ENCODE measurements at regions of chr17 and their contacts with region 1.

Region 1: DNA sequence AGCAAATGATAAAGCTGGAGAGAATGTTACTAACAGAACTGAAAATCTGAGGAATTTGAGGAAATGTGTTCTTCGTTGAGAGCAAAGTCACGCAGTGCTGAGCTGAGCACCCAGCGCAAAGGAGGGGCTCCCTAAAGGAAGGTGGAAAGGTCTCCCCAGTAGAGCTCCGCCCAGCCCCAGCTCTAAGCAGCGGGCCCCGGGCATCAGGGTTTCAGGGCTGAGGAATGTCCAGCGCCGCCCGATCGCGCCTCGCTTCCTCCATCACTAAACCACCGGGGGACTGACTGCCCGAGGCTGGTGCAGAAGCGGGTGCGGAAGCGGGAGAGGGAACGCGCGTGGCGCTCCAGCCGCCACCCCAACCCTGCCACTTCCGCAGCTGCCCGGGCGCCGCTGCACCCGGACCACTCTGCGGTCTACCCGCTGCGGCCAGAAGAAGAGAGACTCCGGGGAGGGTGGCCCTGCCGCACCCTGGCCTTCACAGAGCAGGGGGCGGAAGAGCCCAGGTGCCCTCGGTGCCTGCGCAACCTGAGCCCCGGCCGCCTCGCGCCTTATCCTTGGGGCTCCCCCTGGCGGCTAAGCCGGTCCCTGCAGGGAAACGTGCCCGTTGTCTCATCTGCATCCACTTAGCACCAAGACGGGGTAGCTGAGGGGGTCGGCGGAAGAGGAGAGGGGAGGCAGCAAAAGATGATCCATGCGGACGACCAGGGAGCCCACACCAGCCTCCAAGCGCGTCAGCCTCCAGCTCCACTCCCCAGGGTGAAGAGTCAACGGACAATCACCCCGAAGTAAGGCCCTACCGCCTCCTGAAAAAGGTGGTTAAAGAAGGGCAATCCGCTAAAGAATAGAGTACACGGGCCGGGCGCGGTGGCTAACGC is 12.4 kb upstream of the GUCY2D start:
- DNase-seq: no peak
- H3K4me3 ChIP-seq: peak overlapping the region; percentile 66
- CTCF ChIP-seq: peak; percentile 97

Region 2: GRCh38 chr17:7818746-7819645 is 171.0 kb before region 1 on chr17:
- CTCF ChIA-PET with region 1: interaction called, 41 read pairs
- POLR2A ChIA-PET with region 1: no interaction called
- DNase-seq: no peak
- H3K4me3 ChIP-seq: no peak overlapping the region
- CTCF ChIP-seq: no peak

Region 3: GRCh38 chr17:7873051-7873450 is 117.0 kb before region 1 on chr17:
- CTCF ChIA-PET with region 1: interaction called, 10 read pairs
- POLR2A ChIA-PET with region 1: no interaction called
- DNase-seq: no peak
- H3K4me3 ChIP-seq: no peak overlapping the region
- CTCF ChIP-seq: no peak

Region 4: DNA sequence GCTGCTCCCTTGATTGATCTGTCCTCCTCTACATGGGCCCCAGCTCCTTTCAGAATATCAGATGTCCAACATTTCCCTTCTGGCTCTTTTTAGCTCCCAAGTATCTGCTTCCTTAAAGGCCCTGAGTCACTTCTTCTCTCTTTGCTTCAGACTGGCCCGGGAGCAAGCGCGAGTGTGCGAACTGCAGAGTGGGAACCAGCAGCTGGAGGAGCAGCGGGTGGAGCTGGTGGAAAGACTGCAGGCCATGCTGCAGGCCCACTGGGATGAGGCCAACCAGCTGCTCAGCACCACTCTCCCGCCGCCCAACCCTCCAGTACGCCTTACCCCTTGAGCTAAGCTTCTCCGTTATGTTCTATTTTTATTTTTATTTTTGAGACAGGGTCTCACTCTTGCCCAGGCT is 45.7 kb before region 1 on chr17:
- CTCF ChIA-PET with region 1: interaction called, 173 read pairs
- POLR2A ChIA-PET with region 1: no interaction called
- DNase-seq: no peak
- H3K4me3 ChIP-seq: no peak overlapping the region
- CTCF ChIP-seq: no peak

Region 5: DNA sequence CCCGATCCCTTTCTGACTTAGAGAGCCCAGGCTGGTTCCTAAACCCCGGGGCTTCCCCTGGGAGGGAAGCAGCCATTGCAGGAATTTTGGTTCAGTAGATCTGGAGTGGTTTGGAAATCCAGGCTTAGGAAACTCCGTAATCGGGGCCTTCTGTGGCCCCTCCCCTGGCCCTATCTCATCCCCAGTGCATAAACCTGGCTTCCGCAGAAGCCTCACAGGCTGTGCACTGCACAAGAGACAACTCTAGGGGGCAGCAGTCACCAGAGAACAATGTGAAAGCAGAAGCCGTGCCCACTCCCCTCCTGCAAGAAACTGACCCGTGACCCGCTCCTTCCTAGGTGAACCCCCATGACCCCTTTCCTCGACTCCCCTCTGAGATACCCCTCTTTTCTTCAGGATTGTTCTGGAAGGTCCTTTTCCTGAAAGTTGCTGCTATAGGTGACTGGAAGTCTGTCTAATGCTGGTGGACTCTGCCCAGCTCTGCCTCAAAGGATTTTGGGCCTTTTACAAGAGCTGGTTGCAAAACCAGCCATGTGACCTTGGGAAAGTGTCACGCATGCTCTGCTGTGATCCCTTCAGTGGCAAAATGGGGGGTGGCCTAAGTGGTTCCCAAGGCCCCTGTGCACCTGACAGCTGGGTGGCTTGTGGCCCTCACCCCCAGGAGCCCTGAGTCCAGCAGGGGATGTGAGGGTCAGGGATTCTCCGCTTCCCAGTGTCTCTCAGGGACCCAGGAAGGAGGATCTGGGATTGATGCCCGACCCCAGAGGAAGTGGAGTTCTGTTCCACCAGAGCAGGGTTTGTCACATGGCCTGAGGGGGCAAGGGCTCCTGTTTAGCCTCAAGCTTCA is 26.8 kb after region 1 on chr17:
- CTCF ChIA-PET with region 1: interaction called, 34 read pairs
- POLR2A ChIA-PET with region 1: no interaction called
- DNase-seq: no peak
- H3K4me3 ChIP-seq: no peak overlapping the region
- CTCF ChIP-seq: peak; percentile 44